ENCODE measurements at regions of chr1 and their contacts with region 1.

Region 1: DNA sequence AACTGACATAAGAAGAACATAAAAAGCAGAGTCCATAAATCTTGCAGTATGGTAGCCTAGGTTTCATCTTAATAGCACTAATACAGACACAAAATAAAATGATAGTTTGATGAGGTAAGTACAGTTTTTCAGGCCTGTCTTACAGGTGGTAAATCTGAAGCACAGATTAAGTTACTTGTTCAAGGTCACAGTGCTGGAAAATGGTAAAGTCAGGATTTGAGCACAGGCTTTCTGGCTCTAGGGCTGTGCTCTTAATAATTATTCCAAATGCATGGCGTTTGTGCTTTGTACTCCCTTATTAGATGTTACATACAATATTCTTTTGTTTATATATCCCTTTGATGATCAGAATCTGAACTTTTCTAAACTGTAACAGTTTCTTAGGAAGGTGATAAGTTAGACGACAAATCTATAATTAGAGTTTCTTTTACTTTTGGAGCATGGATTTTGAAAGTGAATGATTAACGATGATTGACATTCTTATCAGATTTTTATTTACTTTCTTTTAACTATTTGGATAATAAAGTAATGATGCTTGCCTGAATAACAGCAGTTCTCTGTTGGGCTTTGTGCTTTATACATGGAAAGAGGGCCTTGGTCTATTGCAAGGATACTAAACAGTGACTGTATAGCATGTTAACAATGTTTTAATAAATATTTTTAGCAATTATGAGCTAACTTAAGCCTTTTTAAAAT is 101.5 kb upstream of the CACYBP start:
- DNase-seq: no peak
- H3K4me3 ChIP-seq: no peak overlapping the region
- H3K4me3 Mint-ChIP-seq: no peak overlapping the region
- H3K27ac ChIP-seq: no peak overlapping the region
- H3K27ac Mint-ChIP-seq: no peak overlapping the region
- H3K4me1 ChIP-seq: no peaks in the 10 kb centered on the region
- H3K4me1 Mint-ChIP-seq: peaks cover 2% of the 10 kb centered on the region
- H3K27me3 ChIP-seq: no peaks in the 10 kb centered on the region
- H3K27me3 Mint-ChIP-seq: peaks cover 0 to 2% (median 0%) of the 10 kb centered on the region in 3 donors
- CTCF ChIP-seq: no peak

Region 2: DNA sequence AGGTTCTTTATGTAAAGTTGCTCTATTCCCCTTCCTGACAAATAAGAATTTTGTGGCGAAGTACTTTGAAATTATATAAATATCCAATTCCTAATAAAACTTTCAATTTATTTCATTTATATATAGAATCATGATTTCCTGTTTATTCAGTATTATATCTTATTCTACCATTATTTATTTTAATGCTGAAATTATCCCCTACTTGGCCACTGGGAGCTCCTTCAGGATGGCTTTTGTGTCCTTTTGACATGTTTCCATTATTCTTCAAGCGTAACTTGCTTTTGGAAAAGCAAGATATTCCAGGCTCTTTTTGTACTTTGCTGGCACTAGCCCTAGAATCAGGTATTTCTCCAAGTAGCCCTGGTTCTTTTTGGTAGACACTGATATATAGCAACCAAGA is 34.3 kb after region 1 on chr1:
- intact Hi-C with region 1: loop called in 1 of 2 experiments (anchors 5 kb)
- DNase-seq: no peak
- H3K4me3 ChIP-seq: no peak overlapping the region
- H3K4me3 Mint-ChIP-seq: no peak overlapping the region
- H3K27ac ChIP-seq: no peak overlapping the region
- H3K27ac Mint-ChIP-seq: no peak overlapping the region
- H3K4me1 ChIP-seq: no peaks in the 10 kb centered on the region
- H3K4me1 Mint-ChIP-seq: no peaks in the 10 kb centered on the region
- H3K27me3 ChIP-seq: no peaks in the 10 kb centered on the region
- H3K27me3 Mint-ChIP-seq: no peaks in the 10 kb centered on the region
- CTCF ChIP-seq: no peak